Psoas muscle (tissue), 8 donors: ENCODE measurements at regions of chr6 and their contacts with region 1.

Region 1: DNA sequence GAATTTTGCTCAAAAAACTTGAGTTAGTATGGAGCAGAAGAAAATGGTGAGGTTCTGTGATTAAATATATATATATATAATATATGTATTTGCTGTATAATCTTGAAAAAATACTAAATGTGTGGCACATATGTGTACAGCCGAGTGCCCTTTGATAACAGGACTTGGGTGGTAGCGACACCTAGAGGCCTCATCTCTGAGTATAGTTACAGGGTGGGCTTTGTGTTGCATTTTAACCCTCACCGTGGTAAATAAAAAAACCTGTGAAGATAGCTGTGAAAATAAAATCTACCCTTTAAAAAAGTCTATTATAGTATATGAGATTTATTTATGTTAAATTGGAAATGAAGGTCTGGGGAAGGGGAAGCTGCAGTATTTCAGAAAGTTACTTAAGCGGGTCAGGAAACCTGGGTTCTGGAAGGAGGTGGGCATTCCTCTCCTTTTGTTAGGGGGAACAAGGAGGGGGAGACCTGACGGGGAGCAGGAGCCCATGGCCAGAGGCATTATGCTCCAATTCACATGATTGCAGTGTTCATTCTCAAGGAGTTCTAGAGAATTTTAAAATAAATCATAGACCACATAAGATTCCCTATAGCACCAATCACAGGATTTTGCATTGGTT is 82.7 kb downstream of the SH3BGRL2 start:
- DNase-seq: peak in 1 of 2 donors; percentile 17
- ATAC-seq: peak in 1 of 4 donors; percentile 74
- H3K4me3 ChIP-seq: no peak overlapping the region
- H3K27ac ChIP-seq: no peak overlapping the region
- H3K4me1 ChIP-seq: no peaks in the 10 kb centered on the region
- H3K27me3 ChIP-seq: no peaks in the 10 kb centered on the region
- CTCF ChIP-seq: peak; percentile 60

Region 2: GRCh38 chr6:78917788-78918187 is 796.0 kb before region 1 on chr6:
- intact Hi-C with region 1: no loop called
- DNase-seq: no peak
- ATAC-seq: no peak
- H3K4me3 ChIP-seq: no peak overlapping the region
- H3K27ac ChIP-seq: no peak overlapping the region
- H3K4me1 ChIP-seq: no peaks in the 10 kb centered on the region
- H3K27me3 ChIP-seq: no peaks in the 10 kb centered on the region
- CTCF ChIP-seq: no peak

Region 3: DNA sequence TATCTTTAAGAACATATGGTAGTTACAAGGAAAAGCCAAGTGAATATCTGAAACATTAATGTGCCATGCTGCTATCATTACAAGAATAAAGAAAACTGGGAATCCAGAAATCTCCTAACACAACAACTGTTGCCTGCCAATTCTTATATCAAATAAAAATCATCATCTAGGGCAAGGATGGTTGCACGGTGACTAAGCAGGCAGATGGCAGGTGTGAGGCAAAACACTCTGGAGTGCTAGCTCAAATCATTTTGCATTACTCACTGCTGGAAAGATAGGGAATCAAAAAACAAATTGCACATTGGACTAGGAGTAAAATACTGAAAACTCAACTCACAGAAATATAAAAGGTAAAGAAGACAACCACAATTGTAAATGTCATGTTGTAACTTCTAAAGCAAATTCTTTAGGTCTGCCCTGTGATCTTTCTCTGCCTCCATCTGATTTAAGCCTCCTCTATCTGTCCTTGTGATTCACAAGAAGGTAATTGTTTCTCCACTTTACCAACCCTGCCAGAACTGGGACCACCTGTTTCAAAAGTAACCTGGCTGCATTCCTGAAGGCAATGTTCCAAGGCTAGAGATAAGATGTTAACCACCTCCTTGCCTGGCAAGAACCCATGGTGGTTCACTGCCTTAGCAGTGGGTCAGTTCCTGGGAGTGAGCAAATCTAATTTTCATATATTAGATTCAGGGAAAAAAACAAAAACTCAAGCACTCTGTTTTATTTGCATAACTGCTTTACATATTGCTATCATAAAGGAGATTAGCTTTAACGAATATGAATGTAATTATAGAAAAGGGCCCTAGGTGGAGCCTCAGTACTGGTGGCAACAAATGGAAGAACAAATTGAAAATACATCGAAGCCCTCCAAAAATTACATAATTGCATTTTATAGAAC is 143.4 kb before region 1 on chr6:
- intact Hi-C with region 1: loop called (anchors 2 to 10 kb)
- DNase-seq: no peak
- ATAC-seq: peak; percentile 71 to 88 (median 78)
- H3K4me3 ChIP-seq: peak overlapping the region; percentile 46
- H3K27ac ChIP-seq: peak overlapping the region; percentile 68
- H3K4me1 ChIP-seq: peaks cover 9% of the 10 kb centered on the region
- H3K27me3 ChIP-seq: no peaks in the 10 kb centered on the region
- CTCF ChIP-seq: peak; percentile 66

Region 4: DNA sequence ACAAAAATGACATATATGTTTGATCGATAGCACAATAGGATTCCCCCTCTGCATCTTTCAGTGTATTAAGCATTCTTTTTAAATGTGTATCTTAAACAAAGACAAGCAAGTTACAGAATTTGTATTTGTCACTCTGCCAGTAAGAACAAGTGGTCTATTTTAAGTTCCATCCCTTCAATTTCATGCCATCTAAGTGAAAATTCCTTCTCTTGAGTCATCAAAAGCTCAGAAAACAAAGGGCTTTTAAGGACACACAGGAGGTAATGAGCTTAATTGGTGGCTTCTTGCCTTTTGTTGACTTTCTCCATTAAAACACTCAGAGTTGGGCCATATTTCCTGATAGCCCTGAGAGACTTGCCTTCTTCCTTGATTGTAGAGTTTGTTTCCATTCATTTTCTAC is 1490.9 kb after region 1 on chr6:
- intact Hi-C with region 1: no loop called
- DNase-seq: no peak
- ATAC-seq: no peak
- H3K4me3 ChIP-seq: no peak overlapping the region
- H3K27ac ChIP-seq: no peak overlapping the region
- H3K4me1 ChIP-seq: no peaks in the 10 kb centered on the region
- H3K27me3 ChIP-seq: no peaks in the 10 kb centered on the region
- CTCF ChIP-seq: no peak